ENCODE measurements at regions of chr18 and their contacts with region 1.

Region 1: GRCh38 chr18:6219116-6219717 is 195.5 kb downstream of the L3MBTL4 start:
- DNase-seq: peak; percentile 78
- ATAC-seq: peak; percentile 89
- H3K4me3 ChIP-seq: no peak overlapping the region
- H3K27ac ChIP-seq: no peak overlapping the region
- H3K4me1 ChIP-seq: no peaks in the 10 kb centered on the region
- H3K27me3 ChIP-seq: no peaks in the 10 kb centered on the region
- CTCF ChIP-seq: peak; percentile 84

Region 2: DNA sequence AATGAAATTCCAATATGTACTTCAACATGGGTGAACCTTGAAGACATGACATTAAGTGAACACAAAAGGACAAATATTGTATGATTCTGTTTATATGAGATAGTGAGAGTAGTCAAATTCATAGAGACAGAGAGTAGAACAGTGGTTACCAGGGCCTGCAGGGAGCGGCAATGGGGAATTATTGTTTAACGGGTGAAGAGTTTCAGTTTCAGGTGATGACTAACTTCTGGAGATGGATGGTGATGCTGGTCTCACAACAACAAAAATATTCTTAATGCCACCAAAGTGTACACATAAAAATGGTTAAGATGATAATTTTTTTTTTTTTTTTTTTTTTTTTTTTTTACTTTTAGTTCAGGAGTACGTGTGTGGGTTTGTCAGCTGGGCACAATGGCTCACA is 214.5 kb before region 1 on chr18:
- CTCF ChIA-PET with region 1: no interaction called
- POLR2A ChIA-PET with region 1: no interaction called
- intact Hi-C with region 1: loop called (anchors 10 kb)
- DNase-seq: no peak
- ATAC-seq: no peak
- H3K4me3 ChIP-seq: no peak overlapping the region
- H3K27ac ChIP-seq: no peak overlapping the region
- H3K4me1 ChIP-seq: peaks cover 7% of the 10 kb centered on the region
- H3K27me3 ChIP-seq: no peaks in the 10 kb centered on the region
- CTCF ChIP-seq: no peak